ENCODE measurements at regions of chr7 and their contacts with region 1.

Region 1: GRCh38 chr7:143380255-143380645 is 895 bp upstream of the ZYX start:
- DNase-seq: peak; percentile 82 to 94 (median 89)
- ATAC-seq: peak; percentile 42
- H3K4me3 ChIP-seq: peak overlapping the region; percentile 96 to 99
- H3K4me3 Mint-ChIP-seq: peak overlapping the region; percentile 90
- H3K27ac ChIP-seq: peak overlapping the region; percentile 84 to 95
- H3K27ac Mint-ChIP-seq: peak overlapping the region; percentile 94
- H3K4me1 ChIP-seq: peaks cover 81% of the 10 kb centered on the region
- H3K4me1 Mint-ChIP-seq: peaks cover 40% of the 10 kb centered on the region
- H3K27me3 ChIP-seq: no peaks in the 10 kb centered on the region
- H3K27me3 Mint-ChIP-seq: no peaks in the 10 kb centered on the region
- CTCF ChIP-seq: peak; percentile 61

Region 2: GRCh38 chr7:142771353-142771723 is 608.9 kb before region 1 on chr7:
- CTCF ChIA-PET with region 1: no interaction called
- POLR2A ChIA-PET with region 1: no interaction called
- intact Hi-C with region 1: no loop called
- DNase-seq: no peak
- ATAC-seq: no peak
- H3K4me3 ChIP-seq: no peak overlapping the region
- H3K4me3 Mint-ChIP-seq: no peak overlapping the region
- H3K27ac ChIP-seq: no peak overlapping the region
- H3K27ac Mint-ChIP-seq: no peak overlapping the region
- H3K4me1 ChIP-seq: no peaks in the 10 kb centered on the region
- H3K4me1 Mint-ChIP-seq: peaks cover 3% of the 10 kb centered on the region
- H3K27me3 ChIP-seq: no peaks in the 10 kb centered on the region
- H3K27me3 Mint-ChIP-seq: no peaks in the 10 kb centered on the region
- CTCF ChIP-seq: no peak

Region 3: DNA sequence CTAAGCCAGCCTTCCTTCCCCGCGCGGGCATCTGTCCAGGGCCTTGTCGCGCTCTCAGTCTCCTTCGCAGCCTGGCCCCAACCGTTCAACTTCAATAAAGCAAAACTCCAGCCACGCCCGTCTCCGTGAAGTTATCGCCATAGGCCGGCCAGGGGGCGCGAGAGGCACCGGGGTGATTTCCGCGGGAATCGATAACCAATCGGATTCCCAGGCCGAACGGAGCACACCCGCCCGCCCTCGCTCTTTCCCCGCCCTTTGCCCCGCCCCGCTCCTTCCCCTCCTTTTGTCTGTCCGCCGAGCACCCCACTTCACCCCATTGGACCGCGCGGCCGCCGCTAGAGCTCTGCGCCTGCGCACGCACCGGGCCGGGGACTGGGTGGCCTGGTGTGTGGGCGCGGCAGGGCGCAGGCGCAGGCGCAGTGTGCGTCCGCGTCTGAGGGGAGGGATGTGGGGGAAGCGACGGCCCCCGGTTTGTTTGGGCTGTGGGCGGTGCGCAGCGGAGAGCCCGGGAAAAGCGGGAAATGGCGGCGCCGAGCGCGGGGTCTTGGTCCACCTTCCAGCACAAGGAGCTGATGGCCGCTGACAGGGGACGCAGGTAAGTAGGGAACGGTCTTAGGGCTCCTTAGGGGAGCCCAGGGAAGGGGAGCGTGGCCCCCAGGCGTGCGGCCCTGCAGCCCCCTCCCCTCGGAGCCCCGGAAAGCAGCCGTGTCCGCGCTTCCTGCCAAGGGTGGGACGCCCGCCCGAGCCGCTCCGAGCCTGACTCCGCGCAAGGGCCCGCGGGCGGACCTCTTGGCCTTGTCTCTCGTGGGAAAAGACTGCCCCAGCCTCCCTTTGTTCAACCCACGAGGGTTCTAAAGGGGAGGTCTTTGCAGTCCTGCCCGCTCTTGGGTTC is 92.1 kb before region 1 on chr7 and contains the start of gene CASP2:
- CTCF ChIA-PET with region 1: interaction called, 12 read pairs
- POLR2A ChIA-PET with region 1: interaction called, 9 read pairs
- intact Hi-C with region 1: loop called (anchors 1 kb)
- DNase-seq: peak; percentile 96 to 100 (median 99)
- ATAC-seq: peak; percentile 96
- H3K4me3 ChIP-seq: peak within 1 kb of the TSS; percentile 91 to 95
- H3K4me3 Mint-ChIP-seq: peak within 1 kb of the TSS; percentile 93
- H3K27ac ChIP-seq: peak within 1 kb of the TSS; percentile 64 to 72
- H3K27ac Mint-ChIP-seq: peak within 1 kb of the TSS; percentile 91
- H3K4me1 ChIP-seq: peaks cover 40% of the 10 kb centered on the region
- H3K4me1 Mint-ChIP-seq: peaks cover 53% of the 10 kb centered on the region
- H3K27me3 ChIP-seq: no peaks in the 10 kb centered on the region
- H3K27me3 Mint-ChIP-seq: no peaks in the 10 kb centered on the region
- CTCF ChIP-seq: peak; percentile 31
- total RNA-seq, gene CASP2: 16.0 to 19.1 TPM

Region 4: GRCh38 chr7:143345428-143345900 is 34.8 kb before region 1 on chr7:
- CTCF ChIA-PET with region 1: interaction called, 6 read pairs
- POLR2A ChIA-PET with region 1: interaction called, 5 read pairs
- intact Hi-C with region 1: loop called in 1 of 2 experiments (anchors 1 kb)
- DNase-seq: peak; percentile 33 to 83 (median 65)
- ATAC-seq: peak; percentile 99
- H3K4me3 ChIP-seq: peak overlapping the region; percentile 32 to 35
- H3K4me3 Mint-ChIP-seq: peak overlapping the region; percentile 69
- H3K27ac ChIP-seq: no peak overlapping the region
- H3K27ac Mint-ChIP-seq: no peak overlapping the region
- H3K4me1 ChIP-seq: peaks cover 5% of the 10 kb centered on the region
- H3K4me1 Mint-ChIP-seq: peaks cover 9% of the 10 kb centered on the region
- H3K27me3 ChIP-seq: no peaks in the 10 kb centered on the region
- H3K27me3 Mint-ChIP-seq: peaks cover 7% of the 10 kb centered on the region
- CTCF ChIP-seq: peak; percentile 64

Region 5: DNA sequence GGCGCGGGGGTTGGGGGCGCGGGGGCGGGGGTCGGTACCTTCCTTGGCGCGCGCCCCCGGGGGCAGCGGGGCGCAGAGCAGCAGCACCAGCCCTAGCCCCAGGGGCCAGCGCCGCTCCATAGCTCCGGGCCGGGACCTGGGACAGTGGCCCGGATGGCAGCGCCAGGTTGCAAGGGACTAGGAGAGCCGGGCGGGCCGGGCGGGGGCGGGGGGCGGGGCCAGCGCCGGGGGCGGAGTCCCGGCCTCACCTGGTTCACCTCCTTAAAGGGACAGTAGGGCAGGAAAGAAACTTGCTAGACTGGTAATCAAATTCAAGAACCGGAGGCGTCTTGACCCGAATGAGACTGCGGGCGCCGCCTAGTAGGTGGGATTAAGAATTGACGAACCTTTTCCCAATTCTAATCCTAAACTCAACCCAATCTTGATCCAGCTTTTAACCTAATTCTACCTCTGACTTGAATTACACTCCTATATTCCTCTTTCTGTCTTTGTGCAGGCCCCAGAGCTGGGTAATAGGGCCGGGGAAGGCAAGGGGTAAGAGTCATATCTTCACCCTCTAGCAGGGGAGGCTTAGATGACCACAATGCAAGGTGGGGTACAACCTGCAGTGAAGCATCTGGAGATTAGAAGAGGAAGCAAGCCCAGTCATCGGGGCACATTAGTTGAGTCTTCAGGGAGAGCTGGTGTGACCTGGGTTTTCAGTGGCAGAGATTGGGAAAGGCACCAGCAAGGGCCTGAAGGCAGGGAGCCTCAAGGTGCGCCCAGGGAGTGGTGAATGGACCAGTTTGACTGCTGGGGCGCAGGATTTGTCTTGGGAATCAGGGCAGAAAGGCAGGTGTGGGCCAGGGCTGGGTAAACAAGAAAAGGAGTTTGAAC is 28.7 kb after region 1 on chr7 and contains the start of gene EPHA1:
- CTCF ChIA-PET with region 1: interaction called, 61 read pairs
- POLR2A ChIA-PET with region 1: interaction called, 31 read pairs
- intact Hi-C with region 1: loop called (anchors 1 kb)
- DNase-seq: peak; percentile 14 to 77 (median 52)
- ATAC-seq: peak; percentile 71
- H3K4me3 ChIP-seq: peak within 1 kb of the TSS; percentile 56 to 58
- H3K4me3 Mint-ChIP-seq: peak within 1 kb of the TSS; percentile 95
- H3K27ac ChIP-seq: peak within 1 kb of the TSS; percentile 22 to 38
- H3K27ac Mint-ChIP-seq: peak within 1 kb of the TSS; percentile 91
- H3K4me1 ChIP-seq: peaks cover 48% of the 10 kb centered on the region
- H3K4me1 Mint-ChIP-seq: peaks cover 57% of the 10 kb centered on the region
- H3K27me3 ChIP-seq: peaks cover 0 to 2% of the 10 kb centered on the region in 2 experiments
- H3K27me3 Mint-ChIP-seq: no peaks in the 10 kb centered on the region
- CTCF ChIP-seq: no peak
- total RNA-seq, gene EPHA1: 8.3 to 13.1 TPM

Region 6: GRCh38 chr7:145065473-145065872 is 1685.2 kb after region 1 on chr7:
- CTCF ChIA-PET with region 1: no interaction called
- POLR2A ChIA-PET with region 1: no interaction called
- intact Hi-C with region 1: no loop called
- DNase-seq: no peak
- ATAC-seq: no peak
- H3K4me3 ChIP-seq: no peak overlapping the region
- H3K4me3 Mint-ChIP-seq: no peak overlapping the region
- H3K27ac ChIP-seq: no peak overlapping the region
- H3K27ac Mint-ChIP-seq: no peak overlapping the region
- H3K4me1 ChIP-seq: no peaks in the 10 kb centered on the region
- H3K4me1 Mint-ChIP-seq: no peaks in the 10 kb centered on the region
- H3K27me3 ChIP-seq: no peaks in the 10 kb centered on the region
- H3K27me3 Mint-ChIP-seq: no peaks in the 10 kb centered on the region
- CTCF ChIP-seq: no peak